Activated CD8-positive, alpha-beta T cell treated with anti-CD3 and anti-CD28 coated beads, Interleukin-2, amount 10 ng/mL, durations not matched to agents 7 days and 5 days (primary cell): ENCODE measurements at regions of chr18 and their contacts with region 1.

Region 1: DNA sequence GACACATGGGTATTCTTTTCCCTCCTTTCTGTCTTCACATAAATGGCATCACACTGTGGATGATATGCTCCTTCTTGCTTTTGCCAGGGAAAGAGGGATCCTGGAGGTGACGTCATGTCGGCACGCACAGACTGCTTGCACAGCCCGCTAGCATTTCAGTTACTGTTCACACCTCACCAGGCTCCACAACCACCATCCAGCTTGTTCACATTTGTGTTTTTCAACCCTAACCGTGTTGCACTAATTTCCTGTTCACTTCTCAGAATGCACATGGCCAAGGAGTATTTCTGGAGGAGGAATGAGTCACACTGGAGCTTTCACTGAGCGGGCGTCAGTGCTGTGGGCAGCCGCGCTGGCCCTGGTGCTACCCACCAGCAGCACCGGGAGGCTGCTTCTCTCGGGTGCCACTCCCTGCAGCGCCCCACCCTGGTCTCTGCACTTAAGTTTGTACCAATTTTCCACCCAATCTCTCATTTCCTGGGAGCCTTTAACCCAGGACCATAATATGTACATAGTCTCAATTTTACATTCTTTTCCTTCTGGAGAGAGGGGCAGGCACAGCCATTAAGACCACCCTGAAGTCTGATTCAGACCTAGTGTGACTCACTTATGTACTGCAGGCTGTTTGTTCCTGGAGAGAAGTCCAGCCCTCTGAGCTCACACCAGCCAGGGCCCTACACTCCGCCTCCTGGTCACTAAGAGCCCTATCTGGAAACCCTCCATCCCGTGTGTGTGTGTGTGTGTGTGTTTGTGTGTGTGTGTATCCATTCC is 65.1 kb downstream of the MBP start:
- DNase-seq: peak; percentile 80
- ATAC-seq: peak; percentile 72
- H3K4me3 Mint-ChIP-seq: peak overlapping the region; percentile 61
- H3K27ac Mint-ChIP-seq: peak overlapping the region; percentile 95
- H3K4me1 Mint-ChIP-seq: peaks cover 99% of the 10 kb centered on the region
- H3K27me3 Mint-ChIP-seq: no peaks in the 10 kb centered on the region

Region 2: DNA sequence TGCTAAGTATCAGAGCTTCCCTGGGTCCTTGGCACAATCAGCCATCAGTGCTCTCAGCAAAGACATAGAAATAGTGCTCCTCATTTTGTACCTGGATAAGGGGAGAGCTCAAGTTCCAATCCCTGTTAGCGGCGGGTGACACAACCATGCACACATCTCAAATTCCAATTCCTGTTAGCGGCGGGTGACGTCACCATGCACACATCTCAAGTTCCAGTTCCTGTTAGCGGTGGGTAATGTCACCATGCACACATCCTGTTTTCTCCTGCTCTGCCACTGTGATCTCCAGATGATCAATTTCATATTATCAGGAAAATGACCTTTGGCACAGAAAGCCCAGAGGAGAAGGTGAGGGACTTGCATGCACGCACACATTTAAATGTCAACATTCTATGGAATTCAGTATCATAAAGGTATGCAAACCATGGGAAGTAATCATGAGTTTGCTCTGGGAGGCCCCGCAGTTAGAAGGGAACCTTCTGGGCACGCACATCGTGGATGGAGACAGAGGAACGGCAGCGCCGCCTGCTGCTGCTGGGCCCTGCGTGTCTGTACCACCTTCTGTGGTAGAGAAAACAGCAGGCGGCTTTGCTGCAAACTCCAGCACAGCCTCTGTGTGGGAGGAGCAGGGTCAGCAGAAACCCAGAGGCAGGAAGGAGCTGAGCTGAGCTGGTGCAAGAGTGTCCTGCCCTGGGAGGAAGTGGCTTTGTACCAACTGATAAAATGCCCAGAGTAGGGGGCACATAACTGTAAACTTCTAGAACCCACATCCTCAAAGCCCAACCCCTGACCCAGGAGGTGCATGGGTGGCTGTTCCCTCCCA is 12.7 kb before region 1 on chr18:
- CTCF ChIA-PET with region 1: interaction called, 62 read pairs
- POLR2A ChIA-PET with region 1: interaction called, 42 read pairs
- DNase-seq: peak; percentile 93
- ATAC-seq: peak; percentile 91
- H3K4me3 Mint-ChIP-seq: peak overlapping the region; percentile 85
- H3K27ac Mint-ChIP-seq: peak overlapping the region; percentile 100
- H3K4me1 Mint-ChIP-seq: peaks cover 71% of the 10 kb centered on the region
- H3K27me3 Mint-ChIP-seq: no peaks in the 10 kb centered on the region

Region 3: DNA sequence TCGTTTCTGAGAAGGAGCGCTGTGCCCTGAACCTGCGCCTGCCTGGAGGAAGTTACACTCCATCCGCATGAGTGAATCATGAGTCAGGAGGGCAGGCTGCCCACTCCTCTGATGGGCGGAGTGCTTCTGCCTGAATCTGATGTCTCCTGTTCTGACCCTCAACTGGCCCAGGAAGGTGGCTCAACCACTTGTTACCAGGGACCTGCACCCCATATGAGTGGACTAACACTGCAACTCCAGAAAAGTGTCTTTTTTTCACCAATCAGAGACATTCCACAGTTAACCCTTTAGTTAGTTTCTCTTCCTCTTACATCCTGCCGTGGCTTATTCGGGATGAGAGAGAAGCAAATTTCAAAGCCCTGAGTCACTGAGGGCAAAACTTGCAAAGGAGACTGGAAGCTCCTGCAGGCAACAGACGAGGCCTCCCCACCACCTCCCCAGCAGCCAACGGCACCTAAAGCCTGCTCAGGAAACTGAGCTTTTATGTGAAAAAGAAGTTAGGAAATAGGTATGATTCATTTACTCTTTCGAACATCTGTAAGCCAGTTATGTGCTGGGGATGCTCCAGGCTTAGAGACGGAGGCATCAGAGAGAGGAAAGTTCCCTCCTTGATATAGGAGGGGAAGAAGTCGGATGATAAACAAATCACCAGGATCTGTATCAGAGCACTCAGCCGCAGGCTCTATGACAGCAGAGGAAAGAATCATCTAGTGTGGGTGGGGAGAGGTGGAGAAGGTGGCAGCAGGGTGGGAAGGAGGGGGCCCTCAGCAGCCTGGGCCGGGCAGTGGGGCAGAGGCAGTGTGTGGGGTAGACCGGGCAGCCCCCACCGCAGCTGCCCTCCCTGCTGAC is 34.2 kb after region 1 on chr18:
- CTCF ChIA-PET with region 1: interaction called, 22 read pairs
- POLR2A ChIA-PET with region 1: interaction called, 103 read pairs
- DNase-seq: peak; percentile 48
- ATAC-seq: peak; percentile 56
- H3K4me3 Mint-ChIP-seq: peak overlapping the region; percentile 71
- H3K27ac Mint-ChIP-seq: peak overlapping the region; percentile 96
- H3K4me1 Mint-ChIP-seq: peaks cover 93% of the 10 kb centered on the region
- H3K27me3 Mint-ChIP-seq: no peaks in the 10 kb centered on the region

Region 4: DNA sequence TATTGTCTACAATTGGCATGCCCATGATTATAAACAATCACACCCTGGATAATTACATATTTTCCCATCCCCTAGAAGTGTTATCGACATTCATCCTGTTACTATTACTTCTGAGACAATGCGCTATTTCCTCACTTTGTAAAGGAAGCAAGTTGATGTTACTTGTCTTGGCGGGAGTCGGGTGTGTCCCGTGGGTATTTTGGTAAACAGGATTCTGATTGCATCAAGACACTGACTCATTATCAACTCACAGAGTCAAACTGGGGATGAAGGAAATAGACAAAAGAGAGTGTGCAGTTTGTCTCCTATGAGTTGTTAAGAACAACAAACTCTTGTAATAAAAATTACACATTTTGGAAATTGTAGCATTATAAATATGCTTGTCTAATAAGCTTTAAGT is 324.8 kb after region 1 on chr18:
- CTCF ChIA-PET with region 1: no interaction called
- POLR2A ChIA-PET with region 1: no interaction called
- DNase-seq: no peak
- ATAC-seq: no peak
- H3K4me3 Mint-ChIP-seq: no peak overlapping the region
- H3K27ac Mint-ChIP-seq: no peak overlapping the region
- H3K4me1 Mint-ChIP-seq: no peaks in the 10 kb centered on the region
- H3K27me3 Mint-ChIP-seq: peaks cover 11% of the 10 kb centered on the region